Right cardiac atrium (tissue), 5 donors: ENCODE measurements at regions of chr11 and their contacts with region 1.

Region 1: GRCh38 chr11:30586251-30587144 is at the start of gene MPPED2:
- DNase-seq: peak; percentile 50 to 81 (median 71)
- ATAC-seq: peak; percentile 86 to 87
- H3K4me3 ChIP-seq: peak within 1 kb of the TSS; percentile 92
- H3K27ac ChIP-seq: no peak within 1 kb of the TSS
- H3K4me1 ChIP-seq: peaks cover 2% of the 10 kb centered on the region
- H3K27me3 ChIP-seq: no peaks in the 10 kb centered on the region
- total RNA-seq, gene MPPED2: 2.4 to 3.8 (median 3.6) TPM

Region 2: DNA sequence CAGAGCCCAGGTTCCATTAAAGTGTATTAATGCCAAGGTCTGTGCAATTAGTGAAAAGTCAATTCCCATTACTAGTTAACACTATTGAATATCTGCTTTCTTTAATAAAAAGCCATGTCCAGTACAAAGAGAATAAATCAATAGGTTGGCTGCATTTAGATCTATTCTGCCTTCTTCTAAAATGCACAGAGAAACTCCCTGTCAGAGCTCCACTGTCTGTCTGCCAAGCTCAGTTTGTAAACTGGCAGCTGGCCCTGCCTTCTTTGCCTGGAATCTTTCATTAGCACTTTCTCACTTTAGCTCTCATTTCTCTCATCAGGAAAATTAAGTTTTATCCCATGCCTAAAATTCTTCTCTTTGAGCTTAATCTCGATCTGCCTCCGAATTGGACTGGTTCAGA is 228.0 kb before region 1 on chr11:
- intact Hi-C with region 1: loop called in 1 of 4 experiments (anchors 10 kb)
- DNase-seq: peak in 1 of 3 donors; percentile 66
- ATAC-seq: no peak
- H3K4me3 ChIP-seq: no peak overlapping the region
- H3K27ac ChIP-seq: no peak overlapping the region
- H3K4me1 ChIP-seq: no peaks in the 10 kb centered on the region
- H3K27me3 ChIP-seq: no peaks in the 10 kb centered on the region

Region 3: GRCh38 chr11:30488304-30488998 is 98.0 kb before region 1 on chr11:
- intact Hi-C with region 1: loop called in 1 of 4 experiments (anchors 10 kb)
- DNase-seq: peak in 1 of 3 donors; percentile 30
- ATAC-seq: peak; percentile 55 to 59
- H3K4me3 ChIP-seq: no peak overlapping the region
- H3K27ac ChIP-seq: no peak overlapping the region
- H3K4me1 ChIP-seq: no peaks in the 10 kb centered on the region
- H3K27me3 ChIP-seq: no peaks in the 10 kb centered on the region